ENCODE measurements at regions of chr20 and their contacts with region 1.

Region 1: DNA sequence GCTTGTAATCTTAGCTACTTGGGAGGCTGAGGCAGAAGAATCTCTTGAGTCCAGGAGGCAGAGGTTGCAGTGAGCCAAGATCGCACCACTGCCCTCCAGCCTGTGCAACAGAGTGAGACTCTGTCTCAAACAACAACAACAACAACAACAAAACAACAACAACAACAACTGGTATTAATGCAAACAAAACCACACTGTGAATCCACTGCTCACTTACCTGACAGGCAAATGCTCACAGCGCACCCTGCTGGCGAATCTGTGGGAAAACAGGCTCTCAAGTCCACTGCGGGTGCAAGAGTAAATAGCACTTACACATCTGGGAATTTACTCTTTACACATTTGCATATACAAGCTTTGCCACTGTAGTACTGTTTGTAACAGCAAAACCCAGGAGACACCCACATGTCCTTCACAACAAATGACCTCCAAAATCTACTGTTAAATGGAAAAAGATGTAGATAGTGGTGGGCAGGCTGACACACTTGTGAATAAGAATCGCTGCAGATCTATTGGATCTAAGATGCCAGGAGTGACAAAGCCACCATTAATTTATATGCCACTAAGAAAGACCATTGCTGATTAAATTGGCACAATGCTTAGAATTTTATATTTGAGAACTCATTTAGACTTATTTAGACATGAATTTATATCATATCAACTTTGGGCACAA is 29.3 kb downstream of the NSFL1C start:
- DNase-seq: peak; percentile 74
- H3K4me3 ChIP-seq: no peak overlapping the region
- H3K27ac ChIP-seq: no peak overlapping the region
- H3K4me1 ChIP-seq: no peaks in the 10 kb centered on the region
- H3K27me3 ChIP-seq: no peaks in the 10 kb centered on the region
- CTCF ChIP-seq: peak; percentile 85

Region 2: DNA sequence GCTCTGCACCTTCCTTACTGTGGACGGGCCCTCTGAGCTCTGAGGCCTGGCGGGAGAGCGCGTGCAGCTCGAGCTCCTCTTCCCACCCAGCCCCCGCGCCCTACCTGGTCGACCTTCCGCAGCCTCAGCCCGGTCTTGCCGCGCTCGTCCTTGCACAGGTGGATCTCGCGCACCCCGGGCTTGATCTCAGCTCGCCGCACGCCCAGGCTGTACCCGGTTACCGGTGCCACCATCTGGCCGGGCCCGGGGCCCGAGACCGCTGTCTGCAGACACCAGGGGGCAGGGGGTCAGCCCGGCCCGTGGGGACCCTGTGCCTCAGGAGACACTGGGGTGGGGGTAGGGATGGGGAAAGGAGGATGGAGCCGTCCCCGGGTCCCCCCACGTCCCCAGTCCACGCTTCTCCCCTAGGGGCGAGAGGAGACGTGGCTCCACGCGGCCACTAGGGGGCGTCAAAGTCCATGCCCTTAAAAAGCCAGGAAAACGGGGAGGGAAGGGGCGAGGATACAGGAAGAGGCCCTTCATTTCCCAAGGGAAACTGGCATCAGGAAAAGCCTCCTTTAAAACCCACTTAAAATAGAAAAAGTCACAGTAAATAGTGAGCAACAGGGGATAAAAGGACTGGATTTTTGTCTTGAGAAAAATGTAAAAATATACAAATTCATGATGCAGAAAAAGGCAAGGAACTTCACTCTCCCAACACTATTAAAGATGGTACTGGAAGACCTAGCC is 124.0 kb before region 1 on chr20:
- intact Hi-C with region 1: loop called (anchors 2 kb)
- DNase-seq: peak; percentile 78
- H3K4me3 ChIP-seq: no peak overlapping the region
- H3K27ac ChIP-seq: no peak overlapping the region
- H3K4me1 ChIP-seq: no peaks in the 10 kb centered on the region
- H3K27me3 ChIP-seq: no peaks in the 10 kb centered on the region
- CTCF ChIP-seq: peak; percentile 97

Region 3: DNA sequence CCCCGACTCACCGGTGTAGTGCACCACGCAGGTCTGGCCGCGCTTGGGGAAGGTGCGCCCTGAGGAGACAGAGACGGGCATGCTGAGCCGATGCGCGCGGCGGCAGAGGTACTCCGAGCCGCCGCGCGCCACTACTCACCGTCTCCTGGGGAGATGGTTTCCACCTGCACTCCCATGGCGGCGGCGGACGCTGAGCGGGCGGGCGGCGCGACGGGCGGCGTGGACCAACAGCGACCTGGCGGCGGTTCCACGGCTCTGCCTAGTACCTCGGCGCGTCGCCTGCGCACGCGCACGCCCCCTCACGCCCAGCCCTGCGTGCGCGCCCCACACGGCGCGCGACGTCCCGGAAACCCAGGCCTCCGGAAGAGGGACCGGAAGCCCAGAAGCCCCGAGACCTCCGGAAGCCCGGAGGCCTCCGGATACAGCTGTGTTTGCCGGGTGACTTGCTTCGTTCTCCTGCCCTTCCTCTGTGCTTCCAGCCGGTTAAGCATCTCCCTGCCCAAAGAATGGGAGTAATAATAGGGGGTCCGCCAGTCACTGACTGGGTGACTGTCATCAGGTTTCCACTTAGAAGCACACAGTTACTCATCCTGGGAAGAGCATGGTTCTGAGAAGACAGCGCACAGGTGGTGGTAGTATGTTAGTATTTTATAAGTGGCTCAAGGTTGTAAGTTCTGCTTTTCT is 44.4 kb before region 1 on chr20 and contains the start of gene FKBP1A:
- intact Hi-C with region 1: loop called (anchors 5 kb)
- DNase-seq: peak; percentile 93
- H3K4me3 ChIP-seq: peak within 1 kb of the TSS; percentile 81
- H3K27ac ChIP-seq: peak within 1 kb of the TSS; percentile 79
- H3K4me1 ChIP-seq: peaks cover 14% of the 10 kb centered on the region
- H3K27me3 ChIP-seq: no peaks in the 10 kb centered on the region
- CTCF ChIP-seq: peak; percentile 17
- total RNA-seq, gene FKBP1A: 307 to 310 TPM

Region 4: DNA sequence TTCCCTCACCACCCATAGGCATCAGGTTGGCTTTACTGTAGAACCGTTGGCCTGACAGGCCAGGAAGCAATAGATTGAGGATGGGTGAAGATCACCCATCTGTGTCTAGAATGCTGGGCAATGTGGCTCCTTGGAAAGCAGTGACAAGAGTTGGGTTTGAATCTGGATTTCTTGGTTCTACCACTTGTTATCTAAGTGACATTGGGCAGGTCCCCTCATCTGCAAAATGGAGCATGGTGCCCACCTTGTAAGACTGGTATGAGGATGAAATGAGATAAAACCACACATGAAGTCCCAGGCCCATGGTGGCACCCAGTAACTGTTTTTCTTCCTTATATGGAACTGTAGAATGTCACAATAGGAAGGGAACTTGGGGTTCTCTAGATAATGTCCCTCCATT is 76.4 kb after region 1 on chr20:
- intact Hi-C with region 1: no loop called
- DNase-seq: no peak
- H3K4me3 ChIP-seq: no peak overlapping the region
- H3K27ac ChIP-seq: no peak overlapping the region
- H3K4me1 ChIP-seq: no peaks in the 10 kb centered on the region
- H3K27me3 ChIP-seq: no peaks in the 10 kb centered on the region
- CTCF ChIP-seq: no peak

Measured in colonic mucosa (tissue), 4 donors.